CD8-positive, alpha-beta memory T cell (primary cell): ENCODE measurements at regions of chr10 and their contacts with region 1.

Region 1: GRCh38 chr10:102713814-102714620 is at the start of gene ARL3:
- DNase-seq: peak; percentile 90 to 97 (median 90)
- H3K4me3 ChIP-seq: peak within 1 kb of the TSS; percentile 93
- H3K4me3 Mint-ChIP-seq: peak within 1 kb of the TSS; percentile 85 to 97 (median 95)
- H3K27ac ChIP-seq: peak within 1 kb of the TSS; percentile 85
- H3K27ac Mint-ChIP-seq: peak within 1 kb of the TSS; percentile 88 to 98 (median 96)
- H3K4me1 ChIP-seq: peaks cover 16% of the 10 kb centered on the region
- H3K4me1 Mint-ChIP-seq: peaks cover 50 to 66% (median 63%) of the 10 kb centered on the region in 3 donors
- H3K27me3 ChIP-seq: no peaks in the 10 kb centered on the region
- H3K27me3 Mint-ChIP-seq: no peaks in the 10 kb centered on the region
- total RNA-seq, gene ARL3: 8.7 TPM

Region 2: GRCh38 chr10:102444851-102445250 is 269.2 kb before region 1 on chr10:
- CTCF ChIA-PET with region 1: no interaction called
- POLR2A ChIA-PET with region 1: no interaction called
- DNase-seq: no peak
- H3K4me3 ChIP-seq: no peak overlapping the region
- H3K4me3 Mint-ChIP-seq: no peak overlapping the region
- H3K27ac ChIP-seq: no peak overlapping the region
- H3K27ac Mint-ChIP-seq: no peak overlapping the region
- H3K4me1 ChIP-seq: peaks cover 6% of the 10 kb centered on the region
- H3K4me1 Mint-ChIP-seq: peaks cover 7 to 10% (median 9%) of the 10 kb centered on the region in 3 donors
- H3K27me3 ChIP-seq: no peaks in the 10 kb centered on the region
- H3K27me3 Mint-ChIP-seq: peaks cover 0 to 2% of the 10 kb centered on the region in 2 donors

Region 3: DNA sequence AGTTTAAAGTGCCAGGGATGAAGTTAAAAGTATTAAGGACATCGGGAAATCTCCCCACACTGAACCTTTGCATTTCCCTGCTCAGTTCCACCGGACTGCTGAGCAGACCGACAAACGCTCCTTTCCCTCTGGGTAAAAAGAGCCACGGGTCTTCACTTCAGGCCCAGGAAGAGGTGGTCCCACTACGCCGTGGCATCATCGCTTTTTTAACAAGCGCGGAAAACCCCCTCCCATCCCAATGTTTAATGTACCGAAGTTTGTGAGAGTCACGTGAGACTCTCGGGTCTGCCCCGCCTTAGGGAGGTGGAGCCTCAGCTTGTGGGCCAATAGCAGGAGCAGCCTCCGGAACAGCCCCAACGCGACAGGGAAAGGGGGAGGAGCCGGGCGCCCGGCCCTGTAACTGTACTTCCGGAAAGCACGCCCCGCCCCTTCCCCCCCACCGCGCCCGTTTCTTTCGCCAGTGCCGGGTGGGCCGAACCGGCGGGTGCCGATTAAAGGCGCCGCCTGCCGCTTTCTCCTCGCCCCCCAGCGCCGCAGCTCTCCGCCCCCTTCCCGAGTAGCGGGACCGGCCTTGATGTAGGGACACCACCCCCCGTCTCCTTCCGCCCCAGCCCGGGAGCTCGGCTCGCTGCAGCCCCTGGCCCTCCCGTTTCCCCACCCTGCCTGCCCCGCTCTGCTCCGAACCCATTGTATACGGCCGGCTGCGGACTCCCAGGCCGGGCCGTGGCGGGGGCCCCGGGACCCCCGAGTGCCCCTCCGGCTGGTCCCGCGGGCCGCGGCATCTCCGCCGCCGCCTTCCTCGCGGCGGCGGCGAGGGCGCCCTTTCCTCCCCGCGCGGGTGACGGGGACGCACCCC is 71.9 kb before region 1 on chr10:
- CTCF ChIA-PET with region 1: interaction called, 43 read pairs
- POLR2A ChIA-PET with region 1: interaction called, 62 read pairs
- DNase-seq: peak; percentile 93 to 99 (median 97)
- H3K4me3 ChIP-seq: peak overlapping the region; percentile 73
- H3K4me3 Mint-ChIP-seq: peak overlapping the region; percentile 93 to 96 (median 94)
- H3K27ac ChIP-seq: peak overlapping the region; percentile 88
- H3K27ac Mint-ChIP-seq: peak overlapping the region; percentile 52 to 98 (median 98)
- H3K4me1 ChIP-seq: peaks cover 8% of the 10 kb centered on the region
- H3K4me1 Mint-ChIP-seq: peaks cover 18% of the 10 kb centered on the region in 3 donors
- H3K27me3 ChIP-seq: no peaks in the 10 kb centered on the region
- H3K27me3 Mint-ChIP-seq: peaks cover 0 to 2% of the 10 kb centered on the region in 2 donors

Region 4: GRCh38 chr10:102660888-102661657 is 52.9 kb before region 1 on chr10:
- CTCF ChIA-PET with region 1: interaction called, 3 read pairs
- POLR2A ChIA-PET with region 1: interaction called, 12 read pairs
- DNase-seq: peak; percentile 41 to 75 (median 53)
- H3K4me3 ChIP-seq: peak overlapping the region; percentile 29
- H3K4me3 Mint-ChIP-seq: peak overlapping the region; percentile 3 to 80 (median 71)
- H3K27ac ChIP-seq: no peak overlapping the region
- H3K27ac Mint-ChIP-seq: peak overlapping the region; percentile 75 to 94 (median 84)
- H3K4me1 ChIP-seq: peaks cover 34% of the 10 kb centered on the region
- H3K4me1 Mint-ChIP-seq: peaks cover 27 to 42% (median 34%) of the 10 kb centered on the region in 3 donors
- H3K27me3 ChIP-seq: no peaks in the 10 kb centered on the region
- H3K27me3 Mint-ChIP-seq: no peaks in the 10 kb centered on the region

Region 5: DNA sequence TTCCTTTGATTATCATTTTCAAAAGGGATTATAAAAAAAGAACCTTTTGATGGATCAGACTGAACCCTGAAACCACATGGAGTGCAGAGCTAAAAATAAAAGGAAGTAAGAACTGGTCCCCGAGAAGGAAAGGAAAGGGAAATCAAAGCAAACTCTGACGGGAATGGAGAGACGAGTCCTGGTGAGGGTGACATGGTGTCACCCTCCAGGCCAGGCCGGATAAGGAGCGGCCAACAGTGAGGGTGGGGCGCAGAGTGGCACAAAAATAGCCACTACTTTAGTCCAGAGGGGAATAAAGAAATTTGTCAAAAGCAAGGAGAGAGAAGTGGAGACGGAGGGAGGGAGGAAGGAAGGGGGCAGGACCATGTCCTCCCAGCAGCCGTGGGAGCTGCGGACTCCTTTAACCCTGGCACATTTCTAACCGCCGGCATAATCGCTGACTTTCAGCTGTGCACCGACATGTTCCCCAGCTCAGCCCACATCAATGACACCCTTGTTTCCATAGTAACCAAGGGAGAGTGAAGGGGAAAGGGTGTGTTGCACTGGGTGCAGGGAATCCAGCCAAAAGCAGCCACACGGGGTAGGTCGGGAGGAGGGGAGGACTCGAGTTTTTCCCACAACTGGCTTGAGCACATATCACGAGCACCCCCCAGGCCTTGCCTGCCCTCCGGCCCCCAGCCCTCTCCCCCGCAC is 40.1 kb before region 1 on chr10:
- CTCF ChIA-PET with region 1: interaction called, 14 read pairs
- POLR2A ChIA-PET with region 1: interaction called, 5 read pairs
- DNase-seq: peak; percentile 37 to 91 (median 82)
- H3K4me3 ChIP-seq: peak overlapping the region; percentile 46
- H3K4me3 Mint-ChIP-seq: peak overlapping the region; percentile 45 to 88 (median 78)
- H3K27ac ChIP-seq: peak overlapping the region; percentile 25
- H3K27ac Mint-ChIP-seq: peak overlapping the region; percentile 79 to 94 (median 92)
- H3K4me1 ChIP-seq: peaks cover 27% of the 10 kb centered on the region
- H3K4me1 Mint-ChIP-seq: peaks cover 34 to 59% (median 49%) of the 10 kb centered on the region in 3 donors
- H3K27me3 ChIP-seq: no peaks in the 10 kb centered on the region
- H3K27me3 Mint-ChIP-seq: no peaks in the 10 kb centered on the region

Region 6: DNA sequence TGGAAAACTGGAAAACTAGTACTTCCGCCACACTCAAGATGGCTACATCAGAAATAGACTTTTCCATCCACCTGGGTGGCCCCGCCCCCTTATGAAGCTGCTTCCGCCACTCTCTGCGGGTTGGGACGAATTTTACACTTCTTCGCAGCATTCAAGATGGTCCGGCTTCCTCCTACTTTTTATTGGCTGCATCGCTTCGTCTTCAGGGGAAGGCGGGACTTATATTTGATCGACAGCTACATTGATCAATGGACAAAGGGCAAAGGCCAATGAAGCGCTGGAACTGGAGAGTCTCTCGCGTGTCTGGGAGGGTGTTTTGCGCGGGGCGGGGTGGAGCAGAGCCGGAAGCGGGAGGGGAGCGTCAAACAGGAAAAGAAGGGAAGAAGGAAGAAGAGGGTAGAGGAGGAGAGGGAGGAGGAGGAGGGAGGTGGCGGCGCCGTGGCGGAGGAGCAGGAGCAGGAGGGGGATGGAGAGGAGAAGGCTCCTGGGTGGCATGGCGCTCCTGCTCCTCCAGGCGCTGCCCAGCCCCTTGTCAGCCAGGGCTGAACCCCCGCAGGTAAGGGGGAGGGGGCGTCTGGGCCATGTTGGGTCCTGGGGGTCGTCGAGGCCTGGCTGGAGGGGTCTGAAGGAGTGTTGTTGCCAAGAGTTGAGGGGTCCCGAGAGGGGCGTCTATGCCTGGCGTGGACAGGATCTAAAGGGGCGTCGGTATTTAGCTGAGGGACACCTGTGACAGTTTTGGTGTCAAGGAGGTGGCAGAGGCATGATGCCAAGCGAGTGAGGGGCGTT is 29.8 kb after region 1 on chr10 and contains the start of gene WBP1L:
- CTCF ChIA-PET with region 1: interaction called, 8 read pairs
- POLR2A ChIA-PET with region 1: interaction called, 20 read pairs
- DNase-seq: peak; percentile 88 to 97 (median 95)
- H3K4me3 ChIP-seq: peak within 1 kb of the TSS; percentile 88
- H3K4me3 Mint-ChIP-seq: peak within 1 kb of the TSS; percentile 81 to 100 (median 94)
- H3K27ac ChIP-seq: peak within 1 kb of the TSS; percentile 71
- H3K27ac Mint-ChIP-seq: peak within 1 kb of the TSS; percentile 8 to 97 (median 94)
- H3K4me1 ChIP-seq: peaks cover 27% of the 10 kb centered on the region
- H3K4me1 Mint-ChIP-seq: peaks cover 44 to 57% (median 48%) of the 10 kb centered on the region in 3 donors
- H3K27me3 ChIP-seq: no peaks in the 10 kb centered on the region
- H3K27me3 Mint-ChIP-seq: no peaks in the 10 kb centered on the region
- total RNA-seq, gene WBP1L: 16.0 to 17.8 TPM